Caco-2 (cell line): ENCODE measurements at regions of chr3 and their contacts with region 1.

Region 1: DNA sequence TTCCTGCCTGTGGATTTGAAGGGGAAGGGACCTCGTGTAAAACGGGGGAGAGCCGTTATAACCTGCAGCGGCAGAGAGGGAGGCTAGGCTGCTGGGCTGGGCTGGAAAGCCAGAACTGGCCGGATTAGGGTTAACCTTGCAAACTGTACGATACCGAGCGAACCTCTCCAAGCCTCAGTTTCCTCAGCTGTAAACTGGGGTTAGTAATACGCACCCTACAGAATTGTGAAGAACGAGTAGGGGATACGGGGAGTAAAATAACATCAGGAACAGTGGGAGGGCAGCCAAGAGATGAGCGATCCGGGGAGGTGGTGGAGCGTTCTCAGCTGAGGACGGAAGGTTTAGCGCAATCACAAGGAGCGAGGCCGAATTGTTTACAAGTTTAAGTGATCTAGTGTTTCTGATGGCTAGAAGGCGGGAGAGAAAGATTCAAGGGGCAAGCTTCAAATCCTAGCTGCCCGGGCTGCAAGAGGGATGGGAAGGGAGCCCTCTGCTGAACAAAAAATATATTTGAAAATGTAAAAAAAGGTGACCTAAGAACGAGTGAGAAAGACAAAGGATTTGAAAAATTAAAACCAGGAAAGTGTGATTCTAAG is 768 bp upstream of the SEMA5B start:
- DNase-seq: peak in 1 of 2 experiments; percentile 53
- H3K4me3 ChIP-seq: peak overlapping the region; percentile 58
- H3K4me3 Mint-ChIP-seq: peak overlapping the region; percentile 70
- H3K27ac Mint-ChIP-seq: no peak overlapping the region
- H3K4me1 ChIP-seq: no peaks in the 10 kb centered on the region
- H3K4me1 Mint-ChIP-seq: peaks cover 12% of the 10 kb centered on the region
- H3K27me3 ChIP-seq: peaks cover 3% of the 10 kb centered on the region
- H3K27me3 Mint-ChIP-seq: peaks cover 11% of the 10 kb centered on the region
- CTCF ChIP-seq: peak; percentile 16 to 50

Region 2: DNA sequence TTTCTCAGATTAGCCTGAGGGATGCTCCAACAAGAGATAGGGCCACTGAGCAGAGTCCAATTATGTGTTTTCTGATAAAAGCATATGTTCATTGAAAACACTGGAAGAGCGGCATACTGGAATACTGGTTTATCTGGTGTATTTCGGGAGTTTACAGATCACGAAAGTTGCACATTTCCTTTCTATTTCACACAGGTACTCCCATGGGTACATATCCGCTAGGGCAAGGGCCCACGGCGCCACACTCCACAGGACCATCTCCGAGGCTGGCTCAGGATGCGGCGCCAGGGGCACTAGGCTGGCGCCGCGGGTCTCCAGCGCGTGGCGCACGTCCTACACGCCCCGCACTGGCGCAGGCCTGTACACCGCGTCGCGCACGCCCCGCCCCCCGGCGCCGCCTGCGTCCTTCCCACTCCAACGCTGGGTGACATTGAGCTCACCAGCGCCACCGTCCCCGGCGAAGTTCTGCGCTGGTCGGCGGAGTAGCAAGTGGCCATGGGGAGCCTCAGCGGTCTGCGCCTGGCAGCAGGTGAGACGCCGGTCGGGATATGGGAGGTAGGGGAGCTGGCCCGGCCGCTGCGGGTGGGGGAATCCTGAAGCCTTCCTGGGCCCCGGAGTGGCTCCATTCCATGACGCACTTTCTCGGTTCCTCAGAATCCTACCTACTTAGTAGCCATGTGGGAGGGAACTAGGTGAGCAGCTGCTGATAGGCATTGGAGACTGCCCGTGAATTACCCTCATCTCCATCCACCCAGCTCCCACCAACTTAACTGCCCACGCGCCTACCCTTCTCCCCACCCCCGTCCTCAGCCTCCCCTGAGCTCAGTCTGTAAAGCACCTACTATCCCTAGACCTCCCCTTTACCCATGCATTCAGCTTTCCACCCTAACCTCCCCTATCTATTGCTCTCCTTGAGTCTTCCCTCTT is 644.3 kb before region 1 on chr3 and contains the start of gene FAM162A:
- CTCF ChIA-PET with region 1: no interaction called
- POLR2A ChIA-PET with region 1: interaction called, 3 read pairs
- intact Hi-C with region 1: loop called (anchors 5 kb)
- DNase-seq: peak; percentile 95 to 97
- H3K4me3 ChIP-seq: peak within 1 kb of the TSS; percentile 77
- H3K4me3 Mint-ChIP-seq: peak within 1 kb of the TSS; percentile 97
- H3K27ac Mint-ChIP-seq: peak within 1 kb of the TSS; percentile 95
- H3K4me1 ChIP-seq: peaks cover 7% of the 10 kb centered on the region; the same call in 1 of the 2 replicates
- H3K4me1 Mint-ChIP-seq: no peaks in the 10 kb centered on the region
- H3K27me3 ChIP-seq: no peaks in the 10 kb centered on the region
- H3K27me3 Mint-ChIP-seq: no peaks in the 10 kb centered on the region
- CTCF ChIP-seq: peak; percentile 42 to 74
- total RNA-seq, gene FAM162A: 35.8 and 37.4 TPM in 2 replicates

Region 3: DNA sequence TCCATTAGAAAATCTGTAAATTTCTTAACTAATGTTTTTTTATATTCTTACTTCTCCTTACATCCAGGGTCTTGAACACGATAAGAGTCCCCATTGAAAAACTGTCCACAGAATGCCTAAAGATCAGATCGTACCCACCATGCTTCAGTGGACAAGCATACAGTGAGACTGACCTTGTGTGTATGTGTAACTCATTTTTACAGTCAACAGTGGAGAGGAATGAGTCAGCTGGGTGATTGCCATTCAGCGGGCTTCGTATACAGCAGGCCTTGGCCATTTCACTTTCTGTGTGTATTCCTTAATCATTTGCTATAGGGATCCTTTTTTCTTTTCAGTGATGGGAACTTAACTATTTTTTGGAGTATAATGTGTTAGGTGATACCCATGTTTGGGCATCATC is 337.1 kb before region 1 on chr3:
- CTCF ChIA-PET with region 1: no interaction called
- POLR2A ChIA-PET with region 1: no interaction called
- intact Hi-C with region 1: loop called (anchors 10 kb)
- DNase-seq: no peak
- H3K4me3 ChIP-seq: no peak overlapping the region
- H3K4me3 Mint-ChIP-seq: no peak overlapping the region
- H3K27ac Mint-ChIP-seq: no peak overlapping the region
- H3K4me1 ChIP-seq: peaks cover 14% of the 10 kb centered on the region
- H3K4me1 Mint-ChIP-seq: peaks cover 29% of the 10 kb centered on the region
- H3K27me3 ChIP-seq: no peaks in the 10 kb centered on the region
- H3K27me3 Mint-ChIP-seq: no peaks in the 10 kb centered on the region
- CTCF ChIP-seq: no peak

Region 4: DNA sequence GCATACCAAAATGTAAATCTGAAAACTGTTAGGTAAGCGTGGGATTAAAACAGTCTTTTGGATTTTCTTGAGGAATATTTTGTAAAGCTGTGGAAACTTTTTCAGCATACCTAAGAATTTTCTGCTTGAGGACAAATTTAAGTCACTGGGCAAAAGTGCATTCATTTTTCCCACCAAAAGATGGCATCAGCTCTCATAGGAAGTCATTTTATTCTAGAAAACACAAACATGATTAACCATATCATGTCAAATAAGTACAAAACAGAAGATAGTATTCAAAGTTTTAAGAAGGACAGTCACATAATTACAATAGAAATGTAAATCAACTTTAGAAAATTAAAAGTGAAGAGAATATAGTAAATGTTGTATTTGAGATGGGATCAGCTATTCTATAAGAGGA is 170.0 kb before region 1 on chr3:
- CTCF ChIA-PET with region 1: no interaction called
- POLR2A ChIA-PET with region 1: no interaction called
- intact Hi-C with region 1: loop called (anchors 1 kb)
- DNase-seq: peak in 1 of 2 experiments; percentile 12
- H3K4me3 ChIP-seq: no peak overlapping the region
- H3K4me3 Mint-ChIP-seq: no peak overlapping the region
- H3K27ac Mint-ChIP-seq: no peak overlapping the region
- H3K4me1 ChIP-seq: no peaks in the 10 kb centered on the region
- H3K4me1 Mint-ChIP-seq: peaks cover 19% of the 10 kb centered on the region
- H3K27me3 ChIP-seq: no peaks in the 10 kb centered on the region
- H3K27me3 Mint-ChIP-seq: no peaks in the 10 kb centered on the region
- CTCF ChIP-seq: peak; percentile 33 to 42

Region 5: GRCh38 chr3:122975163-122975923 is 53.0 kb before region 1 on chr3:
- CTCF ChIA-PET with region 1: no interaction called
- POLR2A ChIA-PET with region 1: no interaction called
- intact Hi-C with region 1: no loop called
- DNase-seq: no peak
- H3K4me3 ChIP-seq: no peak overlapping the region
- H3K4me3 Mint-ChIP-seq: no peak overlapping the region
- H3K27ac Mint-ChIP-seq: no peak overlapping the region
- H3K4me1 ChIP-seq: peaks cover 4% of the 10 kb centered on the region; the same call in 1 of the 2 replicates
- H3K4me1 Mint-ChIP-seq: peaks cover 7% of the 10 kb centered on the region
- H3K27me3 ChIP-seq: no peaks in the 10 kb centered on the region
- H3K27me3 Mint-ChIP-seq: no peaks in the 10 kb centered on the region
- CTCF ChIP-seq: no peak

Region 6: DNA sequence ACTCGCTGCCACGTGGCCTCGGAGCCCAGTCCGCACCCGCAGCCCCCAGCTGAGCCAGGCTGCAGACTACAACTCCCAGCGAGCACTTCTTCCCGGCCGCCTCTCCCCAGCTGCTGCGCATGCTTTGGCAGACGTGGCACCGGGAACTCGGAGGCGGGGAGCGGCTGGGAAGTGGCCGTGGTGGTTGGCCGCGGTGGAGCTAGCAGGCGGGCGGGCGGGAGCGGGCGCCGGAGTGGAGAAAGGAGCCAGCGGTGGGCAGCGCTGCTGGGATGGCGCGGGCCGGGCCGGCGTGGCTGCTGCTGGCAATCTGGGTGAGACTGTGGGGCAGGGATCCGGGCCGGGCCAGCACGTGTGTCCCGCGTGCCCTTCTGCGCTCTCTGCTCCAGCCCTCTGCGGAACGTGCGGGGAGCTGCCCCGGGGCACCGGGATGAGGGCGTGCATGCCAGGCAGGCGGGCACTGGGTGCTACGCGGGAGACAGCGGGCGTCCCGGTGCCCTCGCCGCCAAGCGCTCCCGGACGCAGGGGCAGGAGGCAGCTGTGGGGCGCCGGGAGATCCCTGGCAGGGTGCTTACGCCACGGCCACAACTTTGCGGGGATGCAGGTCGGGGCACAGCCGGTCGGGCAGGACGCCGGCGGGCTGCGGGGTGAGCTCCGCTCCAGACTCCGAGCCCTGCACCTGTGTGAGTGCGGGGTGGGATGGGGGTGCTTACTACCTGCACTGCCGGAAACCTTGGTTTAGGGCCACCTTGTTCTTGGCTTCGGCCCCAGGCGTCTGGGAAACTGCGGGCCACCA is 38.8 kb after region 1 on chr3 and contains the start of gene PDIA5:
- CTCF ChIA-PET with region 1: interaction called, 10 read pairs
- POLR2A ChIA-PET with region 1: interaction called, 3 read pairs
- intact Hi-C with region 1: no loop called
- DNase-seq: peak; percentile 91 to 93
- H3K4me3 ChIP-seq: peak within 1 kb of the TSS; percentile 100
- H3K4me3 Mint-ChIP-seq: peak within 1 kb of the TSS; percentile 72
- H3K27ac Mint-ChIP-seq: peak within 1 kb of the TSS; percentile 81
- H3K4me1 ChIP-seq: peaks cover 12% of the 10 kb centered on the region
- H3K4me1 Mint-ChIP-seq: peaks cover 9% of the 10 kb centered on the region
- H3K27me3 ChIP-seq: no peaks in the 10 kb centered on the region
- H3K27me3 Mint-ChIP-seq: peaks cover 4% of the 10 kb centered on the region
- CTCF ChIP-seq: no peak
- total RNA-seq, gene PDIA5: 48.2 and 55.5 TPM in 2 replicates

Region 7: GRCh38 chr3:123143669-123144411 is 115.5 kb after region 1 on chr3:
- CTCF ChIA-PET with region 1: no interaction called
- POLR2A ChIA-PET with region 1: no interaction called
- intact Hi-C with region 1: no loop called
- DNase-seq: peak; percentile 4 to 44
- H3K4me3 ChIP-seq: no peak overlapping the region
- H3K4me3 Mint-ChIP-seq: no peak overlapping the region
- H3K27ac Mint-ChIP-seq: peak overlapping the region; percentile 33
- H3K4me1 ChIP-seq: no peaks in the 10 kb centered on the region
- H3K4me1 Mint-ChIP-seq: peaks cover 9% of the 10 kb centered on the region
- H3K27me3 ChIP-seq: no peaks in the 10 kb centered on the region
- H3K27me3 Mint-ChIP-seq: no peaks in the 10 kb centered on the region
- CTCF ChIP-seq: no peak